A549 (cell line): ENCODE measurements at regions of chr4 and their contacts with region 1.

Region 1: GRCh38 chr4:173257732-173258717 is 76.1 kb downstream of the HMGB2 start:
- DNase-seq: peak; percentile 5 to 65
- ATAC-seq: peak; percentile 98
- H3K4me3 ChIP-seq: no peak overlapping the region
- H3K27ac ChIP-seq: peak overlapping the region in 1 of 2 experiments; percentile 38; a peak in 2 of 6 replicates
- H3K4me1 ChIP-seq: peaks cover 17% of the 10 kb centered on the region
- CTCF ChIP-seq: peak; percentile 79
- EP300 ChIP-seq: no peak
- POLR2A ChIP-seq: no peak
- RAD21 ChIP-seq: peak; percentile 90

Region 2: DNA sequence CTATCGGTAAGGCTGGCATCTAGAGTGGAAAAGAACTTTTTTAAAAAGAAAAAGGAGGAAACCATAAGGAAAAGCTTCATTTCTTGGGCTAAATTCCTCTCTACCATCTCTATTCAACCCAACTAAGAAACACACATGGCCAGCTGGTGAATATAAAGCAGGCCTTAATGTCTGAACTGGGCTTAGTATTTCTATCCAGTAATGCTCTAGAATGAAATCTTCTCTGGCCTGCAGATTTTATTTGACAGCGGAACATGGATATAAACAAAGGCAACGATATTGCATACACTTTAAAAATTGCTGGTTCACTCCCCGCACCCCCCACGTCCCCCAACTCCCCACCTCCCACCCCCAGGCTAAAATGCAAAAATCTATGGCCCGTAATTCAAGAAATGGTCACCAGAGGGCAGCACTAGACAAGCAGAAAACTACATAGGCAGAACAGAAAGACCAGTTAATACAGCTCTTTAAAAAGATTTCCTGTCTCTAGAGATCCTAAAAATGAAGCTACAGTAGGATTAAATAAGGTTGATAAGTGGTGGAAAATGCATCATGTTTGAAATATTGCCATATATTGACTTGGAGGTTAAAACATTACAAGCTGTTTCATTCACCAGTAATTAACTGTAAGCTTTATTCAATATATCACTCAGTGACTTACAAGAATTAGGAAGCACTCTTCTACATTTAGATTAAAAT is 244.6 kb before region 1 on chr4:
- CTCF ChIA-PET with region 1: interaction called, 41 read pairs
- POLR2A ChIA-PET with region 1: interaction called, 3 read pairs
- DNase-seq: peak; percentile 27 to 42
- ATAC-seq: peak; percentile 54 to 68; a peak in 5 of 6 replicates
- H3K4me3 ChIP-seq: no peak overlapping the region
- H3K27ac ChIP-seq: peak overlapping the region; percentile 70 to 80
- H3K4me1 ChIP-seq: peaks cover 23% of the 10 kb centered on the region
- CTCF ChIP-seq: peak; percentile 70
- EP300 ChIP-seq: no peak
- POLR2A ChIP-seq: no peak
- RAD21 ChIP-seq: peak; percentile 72 to 82

Region 3: GRCh38 chr4:173025131-173025530 is 232.9 kb before region 1 on chr4:
- CTCF ChIA-PET with region 1: interaction called, 40 read pairs
- POLR2A ChIA-PET with region 1: interaction called, 3 read pairs
- DNase-seq: peak; percentile 35 to 71
- ATAC-seq: peak; percentile 94 to 95
- H3K4me3 ChIP-seq: no peak overlapping the region
- H3K27ac ChIP-seq: no peak overlapping the region
- H3K4me1 ChIP-seq: peaks cover 13% of the 10 kb centered on the region
- CTCF ChIP-seq: peak; percentile 59
- EP300 ChIP-seq: no peak
- POLR2A ChIP-seq: no peak
- RAD21 ChIP-seq: peak; percentile 72 to 79

Region 4: GRCh38 chr4:173177232-173177631 is 80.8 kb before region 1 on chr4:
- CTCF ChIA-PET with region 1: interaction called, 10 read pairs
- POLR2A ChIA-PET with region 1: no interaction called
- DNase-seq: no peak
- ATAC-seq: peak; percentile 50 to 54; a peak in 2 of 6 replicates
- H3K4me3 ChIP-seq: no peak overlapping the region
- H3K27ac ChIP-seq: no peak overlapping the region
- H3K4me1 ChIP-seq: peaks cover 80% of the 10 kb centered on the region
- CTCF ChIP-seq: no peak
- EP300 ChIP-seq: no peak
- POLR2A ChIP-seq: no peak
- RAD21 ChIP-seq: no peak

Region 5: GRCh38 chr4:173448603-173449379 is 190.8 kb after region 1 on chr4:
- CTCF ChIA-PET with region 1: no interaction called
- POLR2A ChIA-PET with region 1: no interaction called
- DNase-seq: no peak
- ATAC-seq: no peak
- H3K4me3 ChIP-seq: no peak overlapping the region
- H3K27ac ChIP-seq: no peak overlapping the region
- H3K4me1 ChIP-seq: no peaks in the 10 kb centered on the region
- CTCF ChIP-seq: no peak
- EP300 ChIP-seq: no peak
- POLR2A ChIP-seq: no peak
- RAD21 ChIP-seq: no peak